ENCODE measurements at regions of chr18 and their contacts with region 1.

Region 1: DNA sequence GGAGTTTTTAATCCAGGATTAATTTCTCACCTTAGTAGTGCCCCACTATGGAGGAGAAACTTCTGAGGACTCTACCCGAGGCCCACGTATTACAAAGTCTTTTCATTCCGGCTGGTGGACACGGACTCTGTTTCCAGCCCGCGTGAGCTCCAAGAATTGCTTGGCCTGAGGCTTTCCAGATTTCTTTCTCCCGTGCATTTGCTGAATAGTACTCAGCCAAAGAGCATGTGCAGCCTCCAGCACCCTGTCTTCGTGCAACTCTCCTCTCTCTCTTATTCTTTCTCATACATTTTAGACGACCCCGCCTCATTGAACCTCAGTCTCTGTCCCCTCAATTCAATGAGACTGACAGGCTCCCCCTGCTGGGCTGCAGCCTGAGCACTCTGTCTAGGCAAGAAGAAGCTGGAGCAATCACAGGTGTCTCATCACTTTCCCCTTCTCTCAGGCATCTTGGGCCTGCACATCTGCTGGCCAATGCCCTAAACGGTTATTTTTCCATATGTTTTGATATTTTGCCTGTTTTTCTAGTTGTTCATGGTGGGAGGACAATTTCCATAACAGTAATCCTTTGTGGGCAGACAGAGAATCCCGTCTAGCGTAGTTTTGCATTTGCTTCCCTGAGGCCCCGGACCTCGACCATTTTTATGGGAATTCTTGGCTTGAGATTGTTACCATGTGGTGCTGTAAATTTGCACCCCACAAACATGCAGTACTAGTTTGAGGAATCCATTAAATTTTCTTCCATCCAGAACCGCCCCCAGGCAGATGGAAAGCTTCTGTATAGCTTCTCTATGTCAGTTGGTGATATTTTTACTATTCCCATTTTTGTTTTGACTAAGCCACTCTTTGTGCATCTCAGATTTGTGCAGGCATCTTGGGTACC is 50.1 kb upstream of the LPIN2 start:
- DNase-seq: peak; percentile 83
- H3K4me3 Mint-ChIP-seq: peak overlapping the region; percentile 70
- H3K27ac Mint-ChIP-seq: peak overlapping the region; percentile 91
- H3K4me1 Mint-ChIP-seq: peaks cover 67% of the 10 kb centered on the region
- H3K27me3 Mint-ChIP-seq: no peaks in the 10 kb centered on the region

Region 2: GRCh38 chr18:2787225-2787624 is 275.8 kb before region 1 on chr18:
- CTCF ChIA-PET with region 1: no interaction called
- POLR2A ChIA-PET with region 1: no interaction called
- DNase-seq: no peak
- H3K4me3 Mint-ChIP-seq: no peak overlapping the region
- H3K27ac Mint-ChIP-seq: no peak overlapping the region
- H3K4me1 Mint-ChIP-seq: no peaks in the 10 kb centered on the region
- H3K27me3 Mint-ChIP-seq: no peaks in the 10 kb centered on the region

Region 3: DNA sequence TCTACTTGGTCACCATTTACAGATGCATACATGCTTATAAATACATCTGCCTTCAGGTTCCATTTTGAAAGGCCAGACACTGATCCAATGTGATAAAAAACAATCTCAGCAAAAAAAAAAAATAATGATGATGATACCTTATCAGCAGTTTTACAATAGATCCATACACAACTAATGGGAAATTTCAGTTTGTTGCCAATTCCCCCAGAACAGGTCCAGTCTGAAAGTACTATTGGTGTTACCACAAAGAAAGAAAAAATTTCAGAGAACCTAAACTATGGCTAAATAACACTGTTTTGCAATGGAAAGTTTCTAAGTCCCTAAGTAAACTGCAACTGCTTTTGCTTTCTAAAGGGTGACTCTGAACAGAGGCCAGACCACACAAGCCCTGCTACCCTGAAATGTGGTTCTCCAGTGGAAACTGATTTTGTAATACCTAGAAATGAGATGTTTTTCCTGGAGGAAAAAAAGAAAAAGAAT is 104.2 kb before region 1 on chr18:
- CTCF ChIA-PET with region 1: interaction called, 12 read pairs
- POLR2A ChIA-PET with region 1: interaction called, 65 read pairs
- DNase-seq: peak; percentile 67
- H3K4me3 Mint-ChIP-seq: peak overlapping the region; percentile 73
- H3K27ac Mint-ChIP-seq: peak overlapping the region; percentile 99
- H3K4me1 Mint-ChIP-seq: peaks cover 89% of the 10 kb centered on the region
- H3K27me3 Mint-ChIP-seq: no peaks in the 10 kb centered on the region

Region 4: DNA sequence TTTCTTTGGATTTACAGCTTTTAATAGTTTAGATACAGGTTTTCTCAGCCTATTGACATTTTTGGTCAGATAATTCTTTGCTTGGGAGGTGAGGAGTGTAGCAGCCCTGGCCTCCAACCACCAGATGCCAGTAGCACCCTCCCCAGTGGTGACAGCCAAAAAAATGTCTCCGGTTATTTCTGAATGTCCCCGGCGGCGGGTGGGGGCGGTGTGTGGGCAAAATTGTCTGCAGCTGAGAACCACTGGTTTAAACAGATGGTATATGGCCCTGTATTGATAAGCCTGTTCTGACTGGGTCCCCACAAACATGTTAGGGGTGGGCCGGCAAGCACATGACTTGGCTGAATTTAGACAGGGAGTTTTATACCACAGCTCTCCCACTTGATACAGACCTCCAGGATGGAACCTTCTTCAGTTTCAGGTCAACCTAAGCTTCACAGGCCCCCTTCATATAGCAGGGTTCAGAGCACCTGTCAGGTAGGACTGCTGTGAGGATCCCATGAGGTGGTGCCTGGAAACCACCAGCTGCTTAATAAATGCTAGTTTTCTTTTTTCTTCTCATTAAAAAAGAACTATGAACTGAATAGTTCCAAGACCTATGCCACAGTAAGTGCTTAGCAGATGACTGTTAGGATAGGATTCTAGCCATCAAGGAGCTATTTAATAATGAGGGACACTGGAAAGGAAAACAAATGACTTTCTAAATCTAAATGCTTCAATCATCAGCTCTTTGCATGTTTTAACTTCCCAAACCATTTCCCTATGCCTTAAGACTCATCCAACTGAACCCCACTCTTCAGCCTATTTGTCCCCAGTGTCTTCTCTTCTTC is 68.2 kb before region 1 on chr18:
- CTCF ChIA-PET with region 1: interaction called, 168 read pairs
- POLR2A ChIA-PET with region 1: interaction called, 129 read pairs
- DNase-seq: peak; percentile 77
- H3K4me3 Mint-ChIP-seq: no peak overlapping the region
- H3K27ac Mint-ChIP-seq: peak overlapping the region; percentile 42
- H3K4me1 Mint-ChIP-seq: peaks cover 77% of the 10 kb centered on the region
- H3K27me3 Mint-ChIP-seq: no peaks in the 10 kb centered on the region

Region 5: GRCh38 chr18:3037423-3037915 is 25.6 kb before region 1 on chr18:
- CTCF ChIA-PET with region 1: interaction called, 31 read pairs
- POLR2A ChIA-PET with region 1: interaction called, 21 read pairs
- DNase-seq: peak; percentile 49
- H3K4me3 Mint-ChIP-seq: no peak overlapping the region
- H3K27ac Mint-ChIP-seq: peak overlapping the region; percentile 77
- H3K4me1 Mint-ChIP-seq: peaks cover 27% of the 10 kb centered on the region
- H3K27me3 Mint-ChIP-seq: peaks cover 2% of the 10 kb centered on the region

Region 6: DNA sequence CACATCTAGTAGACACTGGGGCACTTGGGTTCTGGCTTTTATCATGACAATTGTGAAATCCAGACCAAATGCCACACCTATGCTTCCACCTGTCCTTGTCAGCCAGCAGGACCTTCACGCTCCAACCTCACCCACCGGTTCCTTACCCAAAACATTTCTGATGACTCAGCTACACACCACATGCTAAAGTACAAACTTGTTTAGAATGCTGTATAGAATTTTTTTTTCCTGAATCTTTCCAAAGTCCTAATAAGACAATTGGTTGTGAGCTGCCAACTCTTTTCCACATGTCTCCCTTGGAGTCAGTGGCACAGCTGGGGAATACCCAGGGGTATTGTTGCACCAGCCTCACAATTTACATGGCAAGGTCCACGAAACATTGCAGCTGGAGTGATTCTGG is 25.4 kb after region 1 on chr18:
- CTCF ChIA-PET with region 1: interaction called, 25 read pairs
- POLR2A ChIA-PET with region 1: no interaction called
- DNase-seq: no peak
- H3K4me3 Mint-ChIP-seq: no peak overlapping the region
- H3K27ac Mint-ChIP-seq: no peak overlapping the region
- H3K4me1 Mint-ChIP-seq: peaks cover 6% of the 10 kb centered on the region
- H3K27me3 Mint-ChIP-seq: peaks cover 2% of the 10 kb centered on the region